Mammary epithelial cell (primary cell): ENCODE measurements at regions of chr9 and their contacts with region 1.

Region 1: DNA sequence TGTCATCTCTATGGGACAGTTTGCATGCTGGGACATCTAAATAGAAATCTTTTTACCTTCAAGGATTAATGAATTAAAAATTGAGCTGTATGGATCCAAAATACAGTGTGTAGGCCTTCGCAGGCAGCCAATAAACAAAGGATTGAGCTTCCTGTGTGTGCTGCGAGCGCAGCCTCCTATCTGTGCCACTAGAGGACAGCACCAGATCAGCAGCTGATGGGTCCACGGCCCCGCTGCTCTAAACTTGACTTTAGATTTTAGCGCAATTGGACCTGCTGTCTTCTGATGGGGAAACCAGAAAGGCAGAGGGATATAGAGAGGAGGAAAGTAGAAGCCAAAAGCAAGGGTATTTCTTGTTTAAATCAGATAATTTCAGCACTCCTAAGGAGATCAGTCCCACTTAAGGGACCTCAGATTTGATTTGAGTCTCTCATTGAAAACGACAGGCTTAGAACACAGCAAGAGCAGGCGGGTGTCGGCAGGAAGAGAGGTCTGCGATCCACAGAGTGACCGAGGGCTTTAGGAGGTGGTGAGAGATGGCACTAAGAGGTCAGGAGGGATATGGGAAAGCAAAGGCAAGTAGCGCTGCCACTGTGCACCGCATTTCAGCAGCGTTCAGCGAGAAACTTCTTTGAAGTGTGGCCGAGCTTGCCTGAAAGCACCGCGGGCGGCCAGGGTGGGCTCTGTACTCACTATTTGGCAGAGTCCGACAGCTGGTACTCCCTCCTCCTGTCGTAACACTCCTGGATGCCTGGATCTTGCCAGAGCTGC is 214.3 kb downstream of the GNA14 start:
- DNase-seq: peak; percentile 36
- H3K4me3 ChIP-seq: no peak overlapping the region
- H3K27ac ChIP-seq: no peak overlapping the region
- H3K4me1 ChIP-seq: no peaks in the 10 kb centered on the region
- H3K27me3 ChIP-seq: no peaks in the 10 kb centered on the region
- CTCF ChIP-seq: peak; percentile 99

Region 2: DNA sequence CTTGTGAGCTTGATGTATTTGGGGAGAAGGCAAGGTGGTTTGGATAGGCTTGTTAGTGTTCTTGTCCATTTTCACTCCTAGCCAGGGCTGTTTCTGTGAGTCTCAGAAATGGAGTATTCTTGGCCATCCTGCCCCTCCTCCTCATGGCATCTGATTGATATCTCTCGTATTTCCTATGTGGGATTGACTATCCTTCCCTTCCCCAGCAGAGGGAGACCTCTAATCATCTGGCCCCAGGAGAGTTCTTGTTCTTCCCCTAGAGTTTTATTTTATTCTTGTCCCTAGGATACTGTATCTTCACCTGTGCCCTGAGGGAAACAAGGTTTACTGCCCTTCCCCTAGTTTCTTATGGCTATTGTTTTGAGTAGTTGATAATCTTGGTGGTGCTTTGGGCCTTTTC is 142.1 kb before region 1 on chr9:
- CTCF ChIA-PET with region 1: no interaction called
- dilution Hi-C with region 1: no loop called
- in situ Hi-C with region 1: no loop called
- intact Hi-C with region 1: loop called (anchors 5 kb)
- DNase-seq: peak; percentile 57
- H3K4me3 ChIP-seq: no peak overlapping the region
- H3K27ac ChIP-seq: no peak overlapping the region
- H3K4me1 ChIP-seq: no peaks in the 10 kb centered on the region
- H3K27me3 ChIP-seq: no peaks in the 10 kb centered on the region
- CTCF ChIP-seq: peak; percentile 52 to 78

Region 3: GRCh38 chr9:77488439-77489126 is 54.7 kb after region 1 on chr9:
- CTCF ChIA-PET with region 1: interaction called, 3 read pairs
- dilution Hi-C with region 1: no loop called
- in situ Hi-C with region 1: no loop called
- intact Hi-C with region 1: loop called (anchors 1 kb)
- DNase-seq: no peak
- H3K4me3 ChIP-seq: no peak overlapping the region
- H3K27ac ChIP-seq: no peak overlapping the region
- H3K4me1 ChIP-seq: no peaks in the 10 kb centered on the region
- H3K27me3 ChIP-seq: no peaks in the 10 kb centered on the region
- CTCF ChIP-seq: peak; percentile 39 to 64

Region 4: DNA sequence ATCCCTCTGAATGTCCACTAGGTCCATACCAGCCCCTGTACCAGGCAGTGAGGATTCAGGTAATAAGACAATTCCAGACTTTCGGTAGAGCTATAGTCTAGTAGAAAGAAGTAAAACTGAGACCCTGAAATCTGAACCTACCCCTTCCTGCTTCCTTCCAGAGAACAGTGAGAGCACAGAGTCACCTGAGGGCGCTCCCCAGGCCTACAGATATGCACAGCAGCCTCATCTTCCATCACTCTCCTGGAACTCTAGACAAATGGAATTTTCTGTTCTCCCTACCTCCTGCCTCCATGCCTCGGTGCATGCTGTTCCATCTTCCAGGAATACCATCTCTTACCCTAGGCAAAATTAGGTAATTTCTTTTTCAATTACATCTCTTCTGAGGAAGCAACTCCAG is 217.3 kb after region 1 on chr9:
- CTCF ChIA-PET with region 1: no interaction called
- dilution Hi-C with region 1: no loop called
- in situ Hi-C with region 1: no loop called
- intact Hi-C with region 1: loop called (anchors 10 kb)
- DNase-seq: no peak
- H3K4me3 ChIP-seq: no peak overlapping the region
- H3K27ac ChIP-seq: no peak overlapping the region
- H3K4me1 ChIP-seq: peaks cover 14% of the 10 kb centered on the region
- H3K27me3 ChIP-seq: peaks cover 23% of the 10 kb centered on the region
- CTCF ChIP-seq: no peak

Region 5: DNA sequence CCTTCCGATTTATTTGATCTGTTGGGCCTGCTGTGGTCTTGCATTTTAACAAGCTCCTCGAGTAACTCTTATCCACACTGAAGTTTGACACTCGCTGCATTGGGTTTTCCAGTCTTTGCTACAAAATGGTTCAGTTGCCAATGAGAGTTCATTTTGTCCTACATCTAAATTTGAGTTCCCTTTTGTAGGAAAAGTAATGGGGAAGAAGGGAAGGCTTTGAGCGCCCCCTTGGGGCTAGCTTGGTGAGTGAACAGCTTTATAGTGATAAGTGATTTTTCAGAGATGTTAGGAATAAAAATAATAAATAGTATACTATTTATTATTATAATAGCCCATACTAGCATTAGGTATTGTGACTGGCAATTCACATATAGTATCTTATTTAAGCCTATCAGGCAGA is 687.6 kb after region 1 on chr9:
- CTCF ChIA-PET with region 1: interaction called, 5 read pairs
- dilution Hi-C with region 1: no loop called
- in situ Hi-C with region 1: no loop called
- intact Hi-C with region 1: loop called (anchors 1 kb)
- DNase-seq: peak; percentile 54
- H3K4me3 ChIP-seq: no peak overlapping the region
- H3K27ac ChIP-seq: no peak overlapping the region
- H3K4me1 ChIP-seq: peaks cover 28% of the 10 kb centered on the region
- H3K27me3 ChIP-seq: no peaks in the 10 kb centered on the region
- CTCF ChIP-seq: peak; percentile 80